ENCODE measurements at regions of chr7 and their contacts with region 1.

Region 1: GRCh38 chr7:120805636-120806388 is 52.1 kb downstream of the TSPAN12 start:
- DNase-seq: no peak
- ATAC-seq: peak; percentile 64 to 74
- H3K4me3 ChIP-seq: no peak overlapping the region
- H3K27ac ChIP-seq: no peak overlapping the region
- H3K4me1 ChIP-seq: no peaks in the 10 kb centered on the region
- H3K27me3 ChIP-seq: no peaks in the 10 kb centered on the region
- CTCF ChIP-seq: peak; percentile 80

Region 2: DNA sequence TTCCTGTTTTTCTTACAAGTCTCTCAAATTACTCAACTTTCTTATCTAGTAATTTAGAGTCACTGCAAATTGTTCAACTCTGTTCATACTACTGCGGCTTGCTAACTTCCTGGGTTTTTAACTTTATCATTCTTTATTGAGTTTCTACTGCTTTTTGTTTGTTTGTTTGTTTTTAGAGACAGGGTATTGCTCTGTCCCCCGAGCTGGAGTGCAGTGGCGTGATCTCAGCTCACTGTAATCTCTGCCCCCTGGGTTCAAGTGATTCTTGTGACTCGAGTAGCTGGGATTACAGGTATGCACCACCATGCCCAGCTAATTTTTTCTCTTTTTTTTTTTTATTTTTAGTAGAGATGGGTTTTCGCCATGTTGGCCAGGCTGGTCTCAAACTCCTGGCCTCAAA is 130.7 kb before region 1 on chr7:
- intact Hi-C with region 1: no loop called
- DNase-seq: no peak
- ATAC-seq: no peak
- H3K4me3 ChIP-seq: no peak overlapping the region
- H3K27ac ChIP-seq: no peak overlapping the region
- H3K4me1 ChIP-seq: no peaks in the 10 kb centered on the region
- H3K27me3 ChIP-seq: no peaks in the 10 kb centered on the region
- CTCF ChIP-seq: no peak

Region 3: DNA sequence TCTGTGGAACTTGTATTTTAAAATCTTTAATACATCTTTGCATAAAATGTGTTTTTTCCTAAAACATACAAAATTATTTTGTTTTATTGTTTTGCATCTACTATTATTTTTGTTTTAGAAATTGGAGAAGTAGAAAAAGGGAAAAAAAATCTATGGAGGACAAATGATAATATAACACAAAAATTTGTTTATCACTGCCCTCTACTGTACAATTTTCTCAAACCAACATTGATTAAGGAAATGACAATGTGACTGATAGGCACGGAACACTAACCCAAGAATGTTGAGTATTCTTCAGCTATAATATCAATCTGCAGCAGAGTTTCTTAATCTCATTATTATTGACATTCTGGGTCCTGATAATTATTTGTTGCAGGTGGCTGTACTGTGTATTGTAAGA is 135.3 kb after region 1 on chr7:
- intact Hi-C with region 1: loop called (anchors 10 kb)
- DNase-seq: no peak
- ATAC-seq: peak; percentile 13 to 70
- H3K4me3 ChIP-seq: no peak overlapping the region
- H3K27ac ChIP-seq: no peak overlapping the region
- H3K4me1 ChIP-seq: peaks cover 4% of the 10 kb centered on the region
- H3K27me3 ChIP-seq: no peaks in the 10 kb centered on the region
- CTCF ChIP-seq: peak; percentile 37